Activated CD4-positive, alpha-beta T cell treated with anti-CD3 and anti-CD28 coated beads, Interleukin-2, amount 10 ng/mL, durations not matched to agents 7 days and 5 days (primary cell): ENCODE measurements at regions of chr18 and their contacts with region 1.

Region 1: GRCh38 chr18:35267161-35267651 is 22.8 kb downstream of the ZSCAN30 start:
- DNase-seq: peak; percentile 45
- H3K4me3 Mint-ChIP-seq: peak overlapping the region; percentile 80
- H3K27ac Mint-ChIP-seq: peak overlapping the region; percentile 91
- H3K4me1 Mint-ChIP-seq: peaks cover 21% of the 10 kb centered on the region
- H3K27me3 Mint-ChIP-seq: no peaks in the 10 kb centered on the region

Region 2: DNA sequence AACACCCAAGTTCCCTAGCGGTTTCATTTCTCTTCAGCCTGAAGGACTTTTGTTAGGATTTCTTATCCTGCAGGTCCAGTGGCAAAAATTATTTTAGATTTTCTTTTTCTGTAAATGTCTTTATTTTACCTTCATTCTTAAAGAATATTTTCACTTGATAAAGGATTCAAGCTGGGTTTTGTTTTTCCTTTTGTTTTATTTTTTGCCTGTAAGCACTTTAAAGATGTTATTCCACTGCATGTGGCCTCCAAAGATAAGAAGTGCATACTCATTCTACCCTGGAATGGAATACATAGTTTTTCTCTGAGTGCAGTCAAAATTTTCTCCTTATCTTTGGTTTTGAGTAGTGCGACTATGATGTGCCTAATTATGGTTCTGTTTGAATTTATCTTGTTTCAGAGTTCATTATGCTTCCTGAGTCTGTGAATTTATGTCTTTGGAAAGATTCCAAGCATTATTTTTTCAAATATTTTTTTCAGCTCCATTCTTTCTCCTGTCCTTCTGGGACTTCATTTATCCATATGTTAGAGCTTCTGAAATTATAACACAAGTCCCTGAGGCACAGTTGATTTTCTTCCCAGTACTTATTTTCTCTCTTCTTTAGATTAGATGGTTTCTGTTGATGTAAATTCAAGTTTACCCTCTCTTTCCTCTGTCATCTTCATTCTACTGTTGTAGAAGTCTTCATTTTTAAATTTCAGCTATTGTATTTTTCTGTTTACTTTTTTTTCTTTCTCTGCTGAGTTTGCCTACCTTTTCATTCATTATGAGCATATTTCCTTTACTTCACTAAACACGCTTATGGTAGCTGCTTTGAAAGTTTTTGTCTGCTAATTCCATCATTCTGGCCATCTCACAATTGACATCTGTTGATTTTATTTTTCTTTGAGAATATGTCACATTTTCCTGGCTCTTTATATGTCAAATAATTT is 156.4 kb before region 1 on chr18:
- CTCF ChIA-PET with region 1: no interaction called
- POLR2A ChIA-PET with region 1: no interaction called
- DNase-seq: no peak
- H3K4me3 Mint-ChIP-seq: no peak overlapping the region
- H3K27ac Mint-ChIP-seq: no peak overlapping the region
- H3K4me1 Mint-ChIP-seq: peaks cover 7% of the 10 kb centered on the region
- H3K27me3 Mint-ChIP-seq: no peaks in the 10 kb centered on the region

Region 3: DNA sequence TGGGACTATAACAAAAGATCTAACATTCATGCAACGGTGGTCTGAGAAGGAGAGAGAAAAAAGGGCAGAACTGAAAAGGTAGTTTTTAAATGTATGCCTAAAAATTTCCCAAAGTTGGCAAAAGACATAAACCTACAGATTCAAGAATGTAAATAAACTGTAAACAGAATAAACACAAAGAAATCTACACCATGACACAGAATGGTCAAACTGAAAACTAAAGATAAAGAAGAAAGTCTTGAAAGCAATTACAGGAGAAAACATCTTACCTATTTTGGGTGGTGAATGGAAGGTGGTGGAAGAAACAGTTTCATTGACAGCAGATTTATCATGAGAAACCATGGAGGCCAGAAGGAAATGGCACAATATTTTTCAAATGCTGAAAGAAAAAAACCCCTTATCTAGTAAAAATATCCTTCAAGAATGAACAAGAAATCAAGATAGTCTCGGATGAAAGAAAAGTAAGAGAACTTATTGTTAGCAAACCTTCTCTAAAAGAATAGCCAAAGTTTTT is 62.0 kb before region 1 on chr18:
- CTCF ChIA-PET with region 1: no interaction called
- POLR2A ChIA-PET with region 1: no interaction called
- DNase-seq: no peak
- H3K4me3 Mint-ChIP-seq: no peak overlapping the region
- H3K27ac Mint-ChIP-seq: no peak overlapping the region
- H3K4me1 Mint-ChIP-seq: no peaks in the 10 kb centered on the region
- H3K27me3 Mint-ChIP-seq: peaks cover 6% of the 10 kb centered on the region

Region 4: GRCh38 chr18:35253655-35254287 is 13.4 kb before region 1 on chr18:
- CTCF ChIA-PET with region 1: interaction called, 10 read pairs
- POLR2A ChIA-PET with region 1: no interaction called
- DNase-seq: no peak
- H3K4me3 Mint-ChIP-seq: no peak overlapping the region
- H3K27ac Mint-ChIP-seq: no peak overlapping the region
- H3K4me1 Mint-ChIP-seq: no peaks in the 10 kb centered on the region
- H3K27me3 Mint-ChIP-seq: no peaks in the 10 kb centered on the region